Activated CD4-positive, alpha-beta T cell treated with anti-CD3 and anti-CD28 coated beads, Interleukin-2, amount 10 ng/mL, durations not matched to agents 24 days and 14 days (primary cell): ENCODE measurements at regions of chr2 and their contacts with region 1.

Region 1: DNA sequence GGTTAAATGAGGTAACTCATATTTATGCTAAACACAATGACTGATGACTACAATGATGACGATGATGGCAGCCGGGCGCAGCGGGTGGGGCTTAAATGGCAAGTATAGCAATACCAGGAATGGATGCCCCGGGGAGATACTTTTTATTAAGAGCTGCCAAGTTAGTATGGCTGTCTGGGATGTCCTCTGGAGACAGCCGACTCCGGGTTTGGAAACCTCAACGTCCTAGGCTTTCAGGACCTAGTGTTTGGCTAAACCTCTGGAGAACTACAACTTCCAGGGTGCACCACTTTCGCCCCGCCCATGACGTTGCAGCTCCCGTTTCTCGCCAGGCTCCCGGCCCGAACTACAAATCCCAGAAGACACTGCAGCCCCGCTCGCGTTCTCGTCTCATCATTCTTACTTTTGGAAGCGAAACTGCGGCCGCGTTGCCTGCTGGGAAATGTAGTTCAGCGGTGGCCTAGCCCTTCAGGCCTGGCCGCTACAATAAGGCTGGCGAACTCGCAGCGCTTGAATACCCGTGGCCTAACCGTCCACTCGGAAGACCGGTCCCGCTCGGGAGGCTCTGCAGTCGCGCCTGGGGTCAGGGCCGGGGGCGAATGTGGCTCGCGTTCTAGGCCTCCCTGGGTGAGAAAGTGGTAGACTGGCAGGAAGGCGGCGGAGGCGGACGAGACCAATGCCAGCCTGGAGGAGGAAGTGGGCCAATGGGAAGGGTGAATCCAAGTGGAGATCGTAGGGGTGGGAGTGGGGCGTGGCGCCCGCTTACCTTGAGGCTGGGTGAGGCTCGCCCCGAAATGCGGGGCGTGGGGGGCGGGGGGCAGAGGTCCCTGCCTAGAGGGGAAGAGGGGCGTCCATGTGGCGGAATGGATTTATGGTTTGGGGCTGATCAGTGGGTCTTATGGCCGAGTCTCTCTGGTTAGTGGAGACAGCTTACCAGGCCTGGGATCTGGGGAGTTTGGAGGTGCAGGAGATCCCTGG is at the start of gene SMARCAL1:
- DNase-seq: peak; percentile 99
- H3K4me3 Mint-ChIP-seq: peak within 1 kb of the TSS; percentile 100
- H3K27ac Mint-ChIP-seq: peak within 1 kb of the TSS; percentile 96
- H3K4me1 Mint-ChIP-seq: peaks cover 16% of the 10 kb centered on the region
- H3K27me3 Mint-ChIP-seq: peaks cover 11% of the 10 kb centered on the region
- total RNA-seq, gene SMARCAL1: 27.4 and 29.0 TPM in 2 replicates

Region 2: DNA sequence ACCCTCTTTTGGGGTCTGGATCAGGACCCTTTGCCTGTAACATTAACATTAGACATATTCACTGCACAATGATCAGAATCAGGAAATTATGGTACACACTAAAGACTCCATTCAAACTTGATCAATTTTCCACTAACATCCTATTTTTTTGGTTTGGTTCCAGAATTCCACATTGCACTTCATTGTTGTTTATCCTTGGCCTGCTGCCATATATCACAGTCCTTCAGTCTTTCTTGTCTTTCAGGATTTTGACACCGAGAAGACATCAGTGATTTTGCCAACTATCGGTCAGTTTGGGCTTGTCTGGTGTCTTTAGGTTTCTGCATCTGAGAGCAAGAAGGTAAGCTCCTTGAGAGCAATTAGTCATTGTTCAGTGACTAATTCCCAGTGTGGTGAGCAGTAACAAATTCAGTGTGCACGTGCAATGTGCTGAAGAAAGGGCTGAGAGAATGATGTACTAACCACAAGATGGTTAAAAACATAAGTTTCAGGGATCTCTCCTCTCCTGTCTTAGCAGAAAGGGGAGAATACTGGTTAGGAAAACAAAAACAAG is 63.5 kb before region 1 on chr2:
- intact Hi-C with region 1: loop called (anchors 2 kb)
- DNase-seq: no peak
- H3K4me3 Mint-ChIP-seq: no peak overlapping the region
- H3K27ac Mint-ChIP-seq: peak overlapping the region; percentile 78
- H3K4me1 Mint-ChIP-seq: peaks cover 62% of the 10 kb centered on the region
- H3K27me3 Mint-ChIP-seq: peaks cover 4% of the 10 kb centered on the region

Region 3: DNA sequence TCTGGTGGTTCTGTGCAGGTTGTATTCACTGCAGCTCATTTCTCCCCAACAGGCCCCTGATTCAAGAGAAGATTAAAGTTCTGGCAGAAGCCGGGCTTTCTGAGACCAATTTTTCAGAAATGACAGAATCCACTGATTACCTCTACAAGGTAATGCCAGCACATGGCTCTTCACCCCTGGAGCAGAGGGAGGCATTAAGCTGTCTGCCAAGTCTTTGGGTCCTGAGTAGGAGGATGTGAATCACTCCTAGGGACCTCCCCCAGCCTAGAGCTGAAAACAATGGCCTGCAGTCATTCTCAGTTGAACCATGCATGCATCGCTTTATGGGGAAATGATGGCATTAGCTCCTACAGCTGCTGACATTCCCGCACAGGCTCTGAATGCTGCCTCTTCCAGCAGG is 65.8 kb after region 1 on chr2:
- intact Hi-C with region 1: loop called (anchors 5 kb)
- DNase-seq: no peak
- H3K4me3 Mint-ChIP-seq: no peak overlapping the region
- H3K27ac Mint-ChIP-seq: no peak overlapping the region
- H3K4me1 Mint-ChIP-seq: peaks cover 19% of the 10 kb centered on the region
- H3K27me3 Mint-ChIP-seq: no peaks in the 10 kb centered on the region